ENCODE measurements at regions of chr10 and their contacts with region 1.

Region 1: DNA sequence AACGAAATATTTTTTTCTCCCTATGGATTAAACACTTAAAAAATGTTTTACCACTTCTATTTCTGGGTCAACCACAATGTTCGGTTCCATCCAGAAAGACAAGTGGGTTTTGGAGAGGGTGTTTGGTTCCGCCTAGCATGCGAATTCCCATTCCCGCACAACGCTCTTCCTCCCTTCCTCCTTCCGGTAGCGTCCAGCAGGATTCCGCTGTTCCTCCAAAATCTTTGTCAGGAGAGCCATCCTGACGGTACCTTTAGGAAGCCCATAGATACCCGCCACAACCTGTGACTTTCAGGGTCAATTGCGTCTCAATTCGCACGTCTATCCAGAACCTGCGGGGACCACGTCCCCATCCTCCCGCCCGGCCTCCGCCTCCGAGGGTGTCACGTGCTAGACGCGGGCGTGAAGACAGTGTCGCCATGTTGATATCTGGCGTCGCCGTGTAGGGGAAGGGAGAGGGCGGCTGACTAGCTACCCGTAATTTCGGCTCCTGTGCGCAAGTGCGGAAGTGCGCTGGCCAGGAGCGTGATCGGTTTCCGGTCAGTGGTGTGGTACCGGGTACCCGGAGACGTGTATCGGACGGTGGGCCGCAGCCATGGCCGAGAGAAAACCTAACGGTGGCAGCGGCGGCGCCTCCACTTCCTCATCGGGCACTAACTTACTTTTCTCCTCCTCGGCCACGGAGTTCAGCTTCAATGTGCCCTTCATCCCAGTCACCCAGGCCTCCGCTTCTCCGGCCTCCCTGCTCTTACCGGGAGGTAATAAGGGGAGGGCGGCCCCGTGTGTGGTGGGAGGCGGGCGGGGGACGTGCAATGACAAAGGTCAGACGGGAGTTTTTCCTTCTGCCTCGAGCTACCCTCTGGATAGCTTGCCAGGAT is at the start of gene SEC23IP:
- DNase-seq: peak; percentile 98 to 100 (median 99)
- H3K4me3 ChIP-seq: peak within 1 kb of the TSS; percentile 64 to 100 (median 97)
- H3K27ac ChIP-seq: peak within 1 kb of the TSS; percentile 43 to 98 (median 90)
- H3K27me3 ChIP-seq: no peaks in the 10 kb centered on the region
- CTCF ChIP-seq: peak in 37 of 56 donors; percentile 1 to 59 (median 31)
- total RNA-seq, gene SEC23IP: 19.3 to 61.5 (median 35.0) TPM

Region 2: GRCh38 chr10:119516381-119517234 is 375.8 kb before region 1 on chr10:
- intact Hi-C with region 1: no loop called
- DNase-seq: peak in 1 of 10 donors; percentile 34
- H3K4me3 ChIP-seq: no peak overlapping the region
- H3K27ac ChIP-seq: peak overlapping the region in 11 of 59 donors; percentile 11 to 62 (median 38)
- H3K27me3 ChIP-seq: peaks cover 0 to 8% (median 0%) of the 10 kb centered on the region in 45 donors
- CTCF ChIP-seq: no peak

Region 3: DNA sequence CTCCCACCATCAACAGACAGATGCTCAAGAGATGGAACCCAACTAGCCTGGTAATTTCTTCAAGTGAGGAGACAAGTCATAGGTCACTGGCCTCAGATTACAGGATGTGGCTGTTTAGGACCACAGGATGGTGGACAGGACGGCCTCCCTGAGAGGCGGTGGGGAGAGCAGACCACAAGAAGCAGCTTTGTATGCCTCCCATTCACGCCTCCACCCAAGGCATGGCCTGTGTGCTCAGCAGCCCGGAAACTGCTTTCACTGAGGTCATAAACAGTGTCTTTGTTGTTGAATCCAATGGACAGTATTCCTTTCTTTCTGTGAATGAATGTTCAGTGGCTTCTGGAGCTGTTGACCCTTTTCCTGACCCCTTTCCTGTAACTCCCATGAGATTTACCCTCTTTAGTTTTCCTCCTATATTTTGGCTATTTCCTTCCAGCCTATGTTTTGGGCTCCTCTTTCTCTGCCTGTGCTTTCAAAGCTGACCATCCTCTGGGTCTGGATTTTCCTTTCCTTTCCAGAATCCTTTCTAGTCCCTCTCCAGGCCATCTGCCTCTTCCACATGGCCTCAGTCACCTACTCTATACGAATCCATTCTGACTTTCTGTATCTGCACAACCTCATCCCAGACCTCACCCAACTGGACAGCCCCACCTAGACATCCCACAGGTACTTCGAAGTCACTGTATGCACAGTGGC is 199.0 kb before region 1 on chr10:
- intact Hi-C with region 1: no loop called
- DNase-seq: peak in 3 of 10 donors; percentile 49 to 64 (median 61)
- H3K4me3 ChIP-seq: no peak overlapping the region
- H3K27ac ChIP-seq: peak overlapping the region in 25 of 59 donors; percentile 1 to 74 (median 48)
- H3K27me3 ChIP-seq: peaks cover 0 to 3% (median 0%) of the 10 kb centered on the region in 45 donors
- CTCF ChIP-seq: peak in 1 of 56 donors; percentile 27

Region 4: GRCh38 chr10:119872860-119873681 is 19.4 kb before region 1 on chr10:
- intact Hi-C with region 1: loop called (anchors 1 kb)
- DNase-seq: peak; percentile 66 to 93 (median 84)
- H3K4me3 ChIP-seq: peak overlapping the region; percentile 58 to 95 (median 84)
- H3K27ac ChIP-seq: peak overlapping the region; percentile 43 to 97 (median 91)
- H3K27me3 ChIP-seq: no peaks in the 10 kb centered on the region
- CTCF ChIP-seq: peak in 36 of 56 donors; percentile 1 to 60 (median 28)

Region 5: GRCh38 chr10:119981826-119982225 is 89.4 kb after region 1 on chr10:
- intact Hi-C with region 1: no loop called
- DNase-seq: no peak
- H3K4me3 ChIP-seq: no peak overlapping the region
- H3K27ac ChIP-seq: no peak overlapping the region
- H3K27me3 ChIP-seq: peaks cover 0 to 8% (median 0%) of the 10 kb centered on the region in 45 donors
- CTCF ChIP-seq: no peak

Measured in dorsolateral prefrontal cortex (tissue), 120 donors.